ENCODE measurements at regions of chr4 and their contacts with region 1.

Region 1: DNA sequence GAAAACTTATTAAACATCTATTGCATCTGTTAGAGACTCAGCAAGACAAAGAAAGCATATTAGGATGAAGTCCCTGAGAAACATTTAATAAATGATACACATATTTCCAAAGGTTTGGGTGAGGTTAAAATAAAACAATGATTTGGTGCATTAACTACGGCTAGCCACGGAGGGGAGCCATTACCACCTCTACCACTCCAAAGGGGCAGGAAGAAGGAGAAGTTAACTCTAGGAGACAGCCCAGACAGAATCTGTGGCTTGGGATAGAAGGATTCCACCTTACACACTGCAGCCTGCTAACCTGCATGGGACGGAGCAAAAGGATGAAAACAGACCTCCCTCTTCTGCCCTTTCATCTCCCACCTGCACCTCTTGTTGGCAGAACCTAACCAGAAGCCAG is 189.1 kb upstream of the C1QTNF7 start:
- DNase-seq: peak; percentile 56
- ATAC-seq: peak; percentile 35; the same call in 1 of the 2 replicates
- H3K4me3 ChIP-seq: no peak overlapping the region
- H3K27ac ChIP-seq: no peak overlapping the region
- H3K4me1 ChIP-seq: peaks cover 13% of the 10 kb centered on the region
- H3K27me3 ChIP-seq: no peaks in the 10 kb centered on the region
- CTCF ChIP-seq: peak; percentile 72

Region 2: DNA sequence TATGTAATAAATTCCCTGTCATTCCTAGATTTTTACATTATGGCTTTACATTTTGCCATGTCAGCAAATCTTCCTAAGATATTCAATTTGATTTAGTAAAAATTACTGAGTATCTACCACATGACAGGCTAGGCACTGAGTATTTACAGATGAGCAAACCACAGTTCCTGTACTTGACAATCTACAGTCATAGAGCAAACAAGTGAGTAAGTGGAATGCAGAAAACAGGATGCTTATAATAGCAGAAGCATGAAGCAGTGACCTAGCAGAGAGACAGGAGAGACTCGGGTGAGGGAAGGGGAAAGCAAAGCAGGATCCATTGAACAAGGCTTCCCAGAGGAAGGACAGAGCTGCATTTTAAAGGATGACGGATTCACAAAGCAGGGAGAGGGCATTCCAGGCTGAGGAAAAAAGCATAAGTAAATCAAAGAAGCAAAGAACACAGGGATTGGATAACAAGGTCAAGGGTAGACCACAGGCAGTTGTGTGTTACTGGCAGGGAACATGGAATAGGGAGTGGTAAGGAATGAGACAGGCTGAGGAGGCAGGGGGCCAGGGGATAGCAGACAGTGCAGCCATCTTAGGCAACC is 64.4 kb after region 1 on chr4:
- CTCF ChIA-PET with region 1: no interaction called
- POLR2A ChIA-PET with region 1: no interaction called
- intact Hi-C with region 1: loop called (anchors 5 kb)
- DNase-seq: peak; percentile 82
- ATAC-seq: peak; percentile 98
- H3K4me3 ChIP-seq: 0 out of 2 replicates have a peak overlapping the region, but pooled peaks have one; percentile 1
- H3K27ac ChIP-seq: peak overlapping the region; percentile 74
- H3K4me1 ChIP-seq: peaks cover 21% of the 10 kb centered on the region
- H3K27me3 ChIP-seq: no peaks in the 10 kb centered on the region
- CTCF ChIP-seq: no peak

Region 3: DNA sequence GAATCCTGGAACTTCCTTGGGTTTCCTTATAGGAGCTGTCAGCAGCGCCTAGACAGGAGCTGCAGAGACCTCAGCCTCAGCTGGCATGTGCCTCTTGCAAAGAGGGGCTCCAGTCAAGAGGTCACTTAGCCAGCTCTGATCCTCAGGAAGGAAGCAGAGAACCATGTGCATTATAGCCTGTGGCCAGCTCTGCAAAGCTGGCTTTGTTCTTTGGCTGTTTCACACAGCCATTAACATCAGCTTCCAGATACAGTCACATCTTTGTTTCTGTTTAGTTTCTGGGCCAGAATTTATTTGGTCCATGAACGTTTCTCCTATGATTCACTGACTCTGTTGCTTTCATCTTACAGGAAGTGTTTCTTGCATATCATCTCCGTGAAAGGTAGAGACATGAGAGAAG is 323.4 kb after region 1 on chr4:
- CTCF ChIA-PET with region 1: no interaction called
- POLR2A ChIA-PET with region 1: no interaction called
- intact Hi-C with region 1: no loop called
- DNase-seq: no peak
- ATAC-seq: no peak
- H3K4me3 ChIP-seq: no peak overlapping the region
- H3K27ac ChIP-seq: no peak overlapping the region
- H3K4me1 ChIP-seq: no peaks in the 10 kb centered on the region
- H3K27me3 ChIP-seq: no peaks in the 10 kb centered on the region
- CTCF ChIP-seq: no peak

Measured in PC-3 (cell line).